Common myeloid progenitor, CD34-positive (primary cell): ENCODE measurements at regions of chr20 and their contacts with region 1.

Region 1: GRCh38 chr20:41173161-41173721 is 35.9 kb downstream of the PLCG1 start:
- DNase-seq: peak; percentile 36 to 62 (median 58)
- H3K4me3 ChIP-seq: no peak overlapping the region
- H3K27ac ChIP-seq: no peak overlapping the region
- H3K4me1 ChIP-seq: peaks cover 0 to 2% (median 1%) of the 10 kb centered on the region in 4 experiments
- H3K27me3 ChIP-seq: peaks cover 0 to 73% (median 29%) of the 10 kb centered on the region in 5 experiments

Region 2: GRCh38 chr20:41149679-41150131 is 23.5 kb before region 1 on chr20:
- CTCF ChIA-PET with region 1: interaction called, 14 read pairs
- POLR2A ChIA-PET with region 1: no interaction called
- DNase-seq: peak in 1 of 3 donors; percentile 33
- H3K4me3 ChIP-seq: no peak overlapping the region
- H3K27ac ChIP-seq: no peak overlapping the region
- H3K4me1 ChIP-seq: peaks cover 0 to 15% (median 11%) of the 10 kb centered on the region in 4 experiments
- H3K27me3 ChIP-seq: peaks cover 0 to 59% (median 18%) of the 10 kb centered on the region in 5 experiments

Region 3: DNA sequence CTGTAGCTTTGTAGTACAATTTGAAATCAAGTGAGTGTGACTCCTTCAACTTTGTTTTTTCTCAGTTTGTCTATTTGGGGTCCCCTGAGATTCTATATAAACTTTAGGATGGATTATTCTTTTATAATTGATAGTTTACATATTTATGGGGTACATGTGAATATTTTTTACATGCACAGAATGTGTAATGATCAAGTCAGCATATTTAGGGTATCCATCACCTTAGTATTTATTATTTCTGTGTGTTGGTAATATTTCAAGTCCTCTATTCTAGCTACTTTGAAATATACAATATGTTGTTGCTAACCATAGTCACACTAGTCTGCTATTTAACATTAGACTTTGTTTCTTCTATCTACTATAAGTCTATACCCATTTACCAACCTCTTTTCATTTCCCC is 14.4 kb after region 1 on chr20:
- CTCF ChIA-PET with region 1: interaction called, 13 read pairs
- POLR2A ChIA-PET with region 1: no interaction called
- DNase-seq: no peak
- H3K4me3 ChIP-seq: no peak overlapping the region
- H3K27ac ChIP-seq: no peak overlapping the region
- H3K4me1 ChIP-seq: no peaks in the 10 kb centered on the region
- H3K27me3 ChIP-seq: peaks cover 0 to 7% (median 0%) of the 10 kb centered on the region in 5 experiments

Region 4: GRCh38 chr20:41232973-41233926 is 60.0 kb after region 1 on chr20:
- CTCF ChIA-PET with region 1: interaction called, 12 read pairs
- POLR2A ChIA-PET with region 1: no interaction called
- DNase-seq: peak; percentile 23 to 82 (median 68)
- H3K4me3 ChIP-seq: no peak overlapping the region
- H3K27ac ChIP-seq: no peak overlapping the region
- H3K4me1 ChIP-seq: peaks cover 0 to 9% (median 2%) of the 10 kb centered on the region in 4 experiments
- H3K27me3 ChIP-seq: peaks cover 0 to 7% (median 0%) of the 10 kb centered on the region in 5 experiments